CD4-positive, alpha-beta memory T cell (primary cell): ENCODE measurements at regions of chr20 and their contacts with region 1.

Region 1: GRCh38 chr20:35699127-35699975 is at the starts of genes NFS1 and ROMO1:
- DNase-seq: peak; percentile 82 to 88 (median 83)
- H3K4me3 ChIP-seq: peak within 1 kb of the TSS; percentile 90 to 92
- H3K4me3 Mint-ChIP-seq: peak within 1 kb of the TSS; percentile 92 to 99 (median 95)
- H3K27ac ChIP-seq: peak within 1 kb of the TSS; percentile 84
- H3K27ac Mint-ChIP-seq: peak within 1 kb of the TSS; percentile 93 to 99 (median 97)
- H3K4me1 ChIP-seq: peaks cover 38% of the 10 kb centered on the region
- H3K4me1 Mint-ChIP-seq: peaks cover 33 to 67% (median 42%) of the 10 kb centered on the region in 4 donors
- H3K27me3 ChIP-seq: no peaks in the 10 kb centered on the region
- H3K27me3 Mint-ChIP-seq: no peaks in the 10 kb centered on the region
- total RNA-seq, gene NFS1: 30.3 to 33.6 TPM
- total RNA-seq, gene ROMO1: 38.4 to 43.8 TPM

Region 2: DNA sequence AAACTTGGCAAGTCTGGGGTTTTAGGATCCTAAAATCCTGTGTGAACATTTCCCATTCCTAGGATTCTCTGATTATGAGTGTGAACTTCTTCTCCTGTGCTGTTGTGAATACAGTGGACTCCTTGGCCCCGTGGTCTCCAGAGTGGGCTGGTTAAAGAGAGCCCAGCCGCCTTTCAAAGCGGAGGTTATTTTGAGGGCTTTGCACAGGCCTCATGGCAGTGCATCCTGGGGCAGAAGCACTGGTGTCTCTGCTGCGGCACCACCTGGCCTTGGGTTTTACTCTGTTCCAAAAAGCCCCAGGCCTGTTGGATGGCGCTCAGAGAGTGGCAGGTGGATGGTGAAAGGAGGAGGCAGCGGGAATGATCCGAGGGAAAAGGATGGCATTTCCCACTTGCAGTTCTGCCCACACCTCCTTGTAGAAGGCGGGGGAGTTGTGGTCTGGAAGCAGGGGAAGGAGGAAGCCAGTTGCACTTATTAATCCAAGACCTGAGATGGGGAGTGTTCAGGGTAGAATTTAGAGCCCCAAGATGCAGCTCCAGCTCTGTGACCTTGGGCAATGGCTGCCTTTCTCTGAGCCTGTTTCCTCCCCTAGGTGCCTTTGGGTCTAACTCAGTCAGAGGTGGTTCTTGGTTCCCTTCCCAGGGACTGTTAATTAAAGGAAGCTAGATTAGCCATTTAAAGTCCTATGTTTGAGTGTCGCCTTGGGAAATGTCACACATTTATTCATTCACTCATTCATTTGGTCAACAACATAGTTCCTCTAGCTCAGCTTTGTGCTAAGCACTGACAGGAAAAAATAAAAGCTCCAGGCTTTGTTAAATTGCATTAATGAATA is 450.5 kb before region 1 on chr20:
- CTCF ChIA-PET with region 1: no interaction called
- POLR2A ChIA-PET with region 1: no interaction called
- intact Hi-C with region 1: no loop called
- DNase-seq: no peak
- H3K4me3 ChIP-seq: no peak overlapping the region
- H3K4me3 Mint-ChIP-seq: no peak overlapping the region
- H3K27ac ChIP-seq: no peak overlapping the region
- H3K27ac Mint-ChIP-seq: no peak overlapping the region
- H3K4me1 ChIP-seq: peaks cover 27% of the 10 kb centered on the region
- H3K4me1 Mint-ChIP-seq: peaks cover 7 to 28% (median 21%) of the 10 kb centered on the region in 4 donors
- H3K27me3 ChIP-seq: no peaks in the 10 kb centered on the region
- H3K27me3 Mint-ChIP-seq: no peaks in the 10 kb centered on the region

Region 3: DNA sequence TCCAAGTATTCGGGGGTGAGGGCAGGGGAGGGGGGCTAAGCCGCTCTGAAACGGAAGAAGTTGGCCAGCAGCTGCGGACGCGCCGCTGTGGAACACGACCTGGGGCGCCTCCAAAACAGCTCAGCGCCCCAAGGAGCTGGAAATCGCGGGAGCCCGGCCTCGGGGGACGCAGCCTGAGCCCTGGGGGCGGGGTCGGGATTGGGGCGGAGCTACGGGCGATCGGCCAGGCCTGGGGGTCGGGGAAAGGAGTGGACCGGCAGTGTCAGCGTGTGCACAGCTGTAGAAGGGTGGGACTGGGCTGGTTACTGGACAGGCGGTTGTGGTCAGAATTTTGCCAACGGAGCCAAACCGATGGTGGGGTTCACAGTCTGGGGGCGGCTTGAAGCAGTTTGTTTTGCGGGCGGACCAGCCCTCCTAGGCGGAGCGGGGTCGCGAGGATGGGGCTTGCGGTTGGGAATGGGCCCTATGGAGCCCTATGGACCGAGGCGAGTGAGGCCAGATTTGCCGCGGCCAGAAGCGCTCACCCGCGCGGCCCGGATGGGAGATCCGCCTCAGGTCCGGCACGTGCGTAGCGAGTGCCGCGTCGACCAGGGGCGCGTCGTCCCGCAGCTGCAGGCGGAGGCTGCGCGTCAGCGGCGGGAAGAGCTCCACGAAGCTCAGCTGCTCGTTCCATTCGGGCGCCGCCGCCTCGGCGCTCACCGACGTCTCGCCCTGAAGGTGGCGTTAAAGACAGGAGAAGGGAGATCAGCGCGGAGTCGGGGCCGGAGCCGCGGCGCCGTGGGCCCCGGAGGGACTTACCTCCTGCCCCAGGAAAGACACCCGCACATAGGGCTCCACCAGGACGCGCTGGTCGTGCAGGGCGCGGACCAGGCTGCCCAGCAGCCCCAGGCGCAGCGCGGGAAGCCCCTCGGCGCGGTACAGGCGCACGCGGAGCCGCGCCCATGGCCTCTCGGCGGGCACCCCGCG is 98.1 kb before region 1 on chr20:
- CTCF ChIA-PET with region 1: interaction called, 8 read pairs
- POLR2A ChIA-PET with region 1: interaction called, 5 read pairs
- intact Hi-C with region 1: loop called (anchors 2 kb)
- DNase-seq: peak; percentile 78 to 83 (median 79)
- H3K4me3 ChIP-seq: peak overlapping the region; percentile 29 to 50
- H3K4me3 Mint-ChIP-seq: peak overlapping the region; percentile 77 to 85 (median 80)
- H3K27ac ChIP-seq: no peak overlapping the region
- H3K27ac Mint-ChIP-seq: peak overlapping the region in 6 of 7 donors; percentile 22 to 81 (median 52)
- H3K4me1 ChIP-seq: peaks cover 17% of the 10 kb centered on the region
- H3K4me1 Mint-ChIP-seq: peaks cover 2 to 15% (median 4%) of the 10 kb centered on the region in 4 donors
- H3K27me3 ChIP-seq: no peaks in the 10 kb centered on the region
- H3K27me3 Mint-ChIP-seq: peaks cover 2 to 6% of the 10 kb centered on the region in 2 donors

Region 4: GRCh38 chr20:35681960-35682359 is 17.4 kb before region 1 on chr20:
- CTCF ChIA-PET with region 1: no interaction called
- POLR2A ChIA-PET with region 1: no interaction called
- intact Hi-C with region 1: no loop called
- DNase-seq: no peak
- H3K4me3 ChIP-seq: no peak overlapping the region
- H3K4me3 Mint-ChIP-seq: no peak overlapping the region
- H3K27ac ChIP-seq: no peak overlapping the region
- H3K27ac Mint-ChIP-seq: no peak overlapping the region
- H3K4me1 ChIP-seq: no peaks in the 10 kb centered on the region
- H3K4me1 Mint-ChIP-seq: peaks cover 0 to 2% (median 0%) of the 10 kb centered on the region in 4 donors
- H3K27me3 ChIP-seq: no peaks in the 10 kb centered on the region
- H3K27me3 Mint-ChIP-seq: no peaks in the 10 kb centered on the region

Region 5: DNA sequence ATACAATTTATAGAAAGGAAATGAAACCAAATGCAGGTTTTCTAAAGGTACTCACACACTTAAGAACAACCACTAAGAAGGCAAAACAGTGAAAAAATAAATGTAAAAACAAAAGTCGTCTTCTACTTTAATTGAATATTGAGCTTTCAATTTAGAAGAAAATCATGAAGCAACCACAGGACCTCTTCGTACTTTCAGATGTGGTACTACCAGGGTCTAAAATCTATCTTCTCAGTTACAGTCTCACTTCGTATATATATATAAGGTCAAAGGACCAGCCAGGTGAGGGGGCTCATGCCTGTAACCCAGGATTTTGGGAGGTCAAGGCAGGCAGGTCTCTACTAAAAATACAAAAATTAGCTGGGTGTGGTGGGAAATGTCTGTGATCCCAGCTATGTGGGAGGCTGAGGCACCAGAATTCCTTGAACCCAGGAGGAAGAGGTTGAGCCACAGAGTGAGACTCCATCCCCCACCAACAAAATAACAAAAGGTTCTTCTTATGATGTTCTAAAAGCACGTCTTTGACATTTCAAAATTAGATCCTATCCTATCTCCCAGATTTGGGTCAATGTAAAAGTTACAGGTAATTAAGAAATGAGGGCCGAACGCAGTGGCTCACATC is 12.3 kb after region 1 on chr20:
- CTCF ChIA-PET with region 1: no interaction called
- POLR2A ChIA-PET with region 1: interaction called, 29 read pairs
- intact Hi-C with region 1: no loop called
- DNase-seq: no peak
- H3K4me3 ChIP-seq: no peak overlapping the region
- H3K4me3 Mint-ChIP-seq: peak overlapping the region; percentile 52 to 75 (median 60)
- H3K27ac ChIP-seq: peak overlapping the region; percentile 22
- H3K27ac Mint-ChIP-seq: peak overlapping the region; percentile 48 to 87 (median 85)
- H3K4me1 ChIP-seq: peaks cover 65% of the 10 kb centered on the region
- H3K4me1 Mint-ChIP-seq: peaks cover 33 to 75% (median 47%) of the 10 kb centered on the region in 4 donors
- H3K27me3 ChIP-seq: no peaks in the 10 kb centered on the region
- H3K27me3 Mint-ChIP-seq: no peaks in the 10 kb centered on the region

Region 6: GRCh38 chr20:35771689-35772562 is 72.6 kb after region 1 on chr20 and contains the start of gene PHF20:
- CTCF ChIA-PET with region 1: interaction called, 3 read pairs
- POLR2A ChIA-PET with region 1: interaction called, 18 read pairs
- intact Hi-C with region 1: no loop called
- DNase-seq: peak; percentile 99 to 100 (median 99)
- H3K4me3 ChIP-seq: peak within 1 kb of the TSS; percentile 49 to 79
- H3K4me3 Mint-ChIP-seq: peak within 1 kb of the TSS; percentile 87 to 93 (median 91)
- H3K27ac ChIP-seq: peak within 1 kb of the TSS; percentile 94
- H3K27ac Mint-ChIP-seq: peak within 1 kb of the TSS; percentile 96 to 100 (median 100)
- H3K4me1 ChIP-seq: peaks cover 89% of the 10 kb centered on the region
- H3K4me1 Mint-ChIP-seq: peaks cover 57 to 93% (median 72%) of the 10 kb centered on the region in 4 donors
- H3K27me3 ChIP-seq: no peaks in the 10 kb centered on the region
- H3K27me3 Mint-ChIP-seq: no peaks in the 10 kb centered on the region
- total RNA-seq, gene PHF20: 72.9 to 82.3 TPM